ENCODE measurements at regions of chr3 and their contacts with region 1.

Region 1: DNA sequence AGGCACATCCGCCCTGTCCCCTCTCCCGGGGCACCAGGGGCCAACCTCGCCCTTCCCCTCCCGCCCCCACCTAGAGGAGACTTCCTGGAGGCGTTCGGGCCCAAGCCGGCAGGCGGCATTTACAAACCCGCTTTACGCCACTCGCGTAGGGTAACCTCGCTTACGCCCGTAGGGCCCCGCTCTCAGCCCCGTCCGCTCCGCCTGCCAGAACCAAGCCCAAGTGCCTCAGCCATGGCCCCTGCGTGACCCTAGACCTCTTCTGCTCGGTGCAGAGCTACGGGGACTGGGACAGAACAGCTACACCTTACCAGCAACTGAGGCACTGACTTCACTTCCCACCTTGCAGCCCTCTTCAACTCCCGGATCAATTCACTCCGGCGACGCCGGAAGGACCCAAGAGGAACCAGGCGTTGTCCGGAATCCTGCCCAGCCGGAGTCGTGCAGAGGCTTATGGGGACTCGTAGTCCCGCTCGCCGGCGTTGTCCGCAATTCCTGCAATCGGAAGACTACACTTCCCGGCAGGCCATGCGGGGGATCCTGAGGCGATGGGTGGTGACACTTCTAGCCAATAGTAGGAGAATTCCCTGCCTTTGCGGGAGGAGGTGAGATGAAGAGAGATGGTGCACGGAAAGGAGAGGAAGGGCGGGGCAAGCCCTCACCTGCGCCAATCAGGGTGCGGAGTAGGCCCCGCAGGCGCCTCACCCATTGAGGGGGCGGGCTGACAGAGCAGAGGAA is at the start of gene PDCD10:
- DNase-seq: peak; percentile 98
- ATAC-seq: peak; percentile 84
- H3K4me3 ChIP-seq: peak within 1 kb of the TSS; percentile 85 to 99 (median 90)
- H3K4me3 Mint-ChIP-seq: no peak within 1 kb of the TSS
- H3K27ac ChIP-seq: peak within 1 kb of the TSS; percentile 72 to 91
- H3K27ac Mint-ChIP-seq: no peak within 1 kb of the TSS
- H3K4me1 ChIP-seq: peaks cover 7 to 41% of the 10 kb centered on the region in 2 donors
- H3K4me1 Mint-ChIP-seq: peaks cover 29% of the 10 kb centered on the region
- H3K27me3 ChIP-seq: no peaks in the 10 kb centered on the region
- H3K27me3 Mint-ChIP-seq: no peaks in the 10 kb centered on the region
- CTCF ChIP-seq: no peak
- total RNA-seq, gene PDCD10: 54.4 and 58.0 TPM in 2 replicates

Region 2: DNA sequence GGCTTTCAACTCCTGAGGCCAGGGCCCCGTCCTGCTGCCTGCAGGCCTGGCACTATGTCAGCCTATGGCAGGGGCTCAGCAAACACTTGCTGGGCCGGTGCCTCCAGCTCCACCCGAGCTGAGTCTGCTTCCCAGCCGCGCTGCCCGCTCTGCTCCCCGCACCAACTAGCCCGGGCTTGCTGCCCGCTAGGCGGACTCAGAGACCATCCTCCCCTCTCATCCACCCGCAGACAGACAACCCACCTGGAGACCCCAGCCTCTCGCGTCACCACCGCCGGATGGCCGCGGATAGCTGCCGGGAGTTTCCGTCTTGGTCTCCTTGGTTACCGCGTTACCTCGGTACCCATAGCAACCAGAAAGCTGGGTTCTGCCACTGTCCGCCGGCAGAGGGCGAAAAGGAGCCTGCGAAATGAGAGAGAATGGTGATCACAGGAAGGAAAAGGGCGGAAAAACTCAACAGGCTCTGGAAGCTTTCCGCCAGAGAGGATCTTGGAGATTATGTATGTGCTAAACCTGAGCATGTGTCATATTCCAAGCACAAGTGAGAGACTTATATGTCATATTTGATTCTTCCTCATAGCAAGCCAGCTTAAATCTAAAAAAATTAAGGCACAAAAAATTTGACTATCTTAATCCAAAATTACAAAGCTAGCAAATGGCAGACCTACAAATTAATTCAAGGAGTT is 354.5 kb before region 1 on chr3 and contains the start of gene ZBBX:
- CTCF ChIA-PET with region 1: interaction called, 4 read pairs
- POLR2A ChIA-PET with region 1: no interaction called
- intact Hi-C with region 1: loop called (anchors 2 kb)
- DNase-seq: peak; percentile 92
- ATAC-seq: peak; percentile 95
- H3K4me3 ChIP-seq: peak within 1 kb of the TSS in 4 of 5 experiments; percentile 33 to 56 (median 48)
- H3K4me3 Mint-ChIP-seq: peak within 1 kb of the TSS; percentile 89
- H3K27ac ChIP-seq: peak within 1 kb of the TSS; percentile 13 to 45
- H3K27ac Mint-ChIP-seq: peak within 1 kb of the TSS; percentile 69
- H3K4me1 ChIP-seq: peaks cover 7 to 8% of the 10 kb centered on the region in 2 donors
- H3K4me1 Mint-ChIP-seq: peaks cover 8% of the 10 kb centered on the region
- H3K27me3 ChIP-seq: peaks cover 0 to 3% (median 0%) of the 10 kb centered on the region in 4 experiments
- H3K27me3 Mint-ChIP-seq: peaks cover 5% of the 10 kb centered on the region
- CTCF ChIP-seq: peak; percentile 91
- total RNA-seq, gene ZBBX: not detected in 2 replicates

Region 3: GRCh38 chr3:167691366-167691765 is 43.3 kb before region 1 on chr3:
- CTCF ChIA-PET with region 1: no interaction called
- POLR2A ChIA-PET with region 1: no interaction called
- intact Hi-C with region 1: loop called (anchors 2 kb)
- DNase-seq: peak; percentile 60
- ATAC-seq: peak; percentile 96
- H3K4me3 ChIP-seq: no peak overlapping the region
- H3K4me3 Mint-ChIP-seq: peak overlapping the region; percentile 2
- H3K27ac ChIP-seq: peak overlapping the region in 1 of 2 donors; percentile 31
- H3K27ac Mint-ChIP-seq: peak overlapping the region; percentile 39
- H3K4me1 ChIP-seq: peaks cover 9 to 14% of the 10 kb centered on the region in 2 donors
- H3K4me1 Mint-ChIP-seq: peaks cover 14% of the 10 kb centered on the region
- H3K27me3 ChIP-seq: no peaks in the 10 kb centered on the region
- H3K27me3 Mint-ChIP-seq: no peaks in the 10 kb centered on the region
- CTCF ChIP-seq: no peak

Region 4: DNA sequence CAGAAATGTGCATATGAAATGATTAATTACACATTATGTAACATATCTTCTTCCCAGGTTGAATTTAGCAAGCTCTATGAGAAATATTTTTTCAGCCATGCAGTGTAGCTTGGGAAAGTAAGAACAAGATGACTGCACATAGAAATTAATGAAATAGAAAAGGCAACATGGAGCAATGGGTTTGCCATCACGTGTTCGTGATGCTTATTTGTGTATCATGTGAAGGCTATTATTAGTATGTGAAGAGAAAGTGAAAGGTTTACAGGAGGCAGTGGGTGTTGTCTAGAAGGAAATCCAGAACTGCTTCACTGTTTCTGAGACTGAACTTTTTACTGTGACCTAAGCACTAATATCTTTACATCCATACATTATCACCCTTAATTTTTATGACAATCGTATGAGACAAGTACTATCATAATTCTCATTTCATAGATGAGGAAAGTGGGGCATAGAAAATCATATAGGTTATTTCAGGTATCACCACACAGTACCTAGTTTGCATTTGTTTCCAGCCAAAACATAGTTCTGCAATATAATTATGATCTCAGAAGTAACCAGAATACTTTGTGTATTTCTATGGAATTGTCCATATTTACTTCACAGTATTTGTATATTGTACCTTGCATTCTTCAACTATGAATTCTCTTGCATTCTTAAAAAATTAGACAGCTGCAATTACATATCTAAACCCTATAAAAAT is 15.8 kb after region 1 on chr3:
- CTCF ChIA-PET with region 1: interaction called, 32 read pairs
- POLR2A ChIA-PET with region 1: interaction called, 12 read pairs
- intact Hi-C with region 1: loop called (anchors 1 kb)
- DNase-seq: peak; percentile 83
- ATAC-seq: peak; percentile 87
- H3K4me3 ChIP-seq: peak overlapping the region in 3 of 5 experiments; percentile 13 to 45 (median 15)
- H3K4me3 Mint-ChIP-seq: peak overlapping the region; percentile 84
- H3K27ac ChIP-seq: peak overlapping the region; percentile 73 to 83
- H3K27ac Mint-ChIP-seq: peak overlapping the region; percentile 95
- H3K4me1 ChIP-seq: peaks cover 35 to 66% of the 10 kb centered on the region in 2 donors
- H3K4me1 Mint-ChIP-seq: peaks cover 77% of the 10 kb centered on the region
- H3K27me3 ChIP-seq: no peaks in the 10 kb centered on the region
- H3K27me3 Mint-ChIP-seq: no peaks in the 10 kb centered on the region
- CTCF ChIP-seq: no peak

Region 5: GRCh38 chr3:167783781-167784180 is 49.1 kb after region 1 on chr3:
- CTCF ChIA-PET with region 1: no interaction called
- POLR2A ChIA-PET with region 1: no interaction called
- intact Hi-C with region 1: no loop called
- DNase-seq: no peak
- ATAC-seq: no peak
- H3K4me3 ChIP-seq: no peak overlapping the region
- H3K4me3 Mint-ChIP-seq: no peak overlapping the region
- H3K27ac ChIP-seq: no peak overlapping the region
- H3K27ac Mint-ChIP-seq: no peak overlapping the region
- H3K4me1 ChIP-seq: no peaks in the 10 kb centered on the region
- H3K4me1 Mint-ChIP-seq: peaks cover 2% of the 10 kb centered on the region
- H3K27me3 ChIP-seq: no peaks in the 10 kb centered on the region
- H3K27me3 Mint-ChIP-seq: no peaks in the 10 kb centered on the region
- CTCF ChIP-seq: no peak

Region 6: GRCh38 chr3:167830007-167830406 is 95.3 kb after region 1 on chr3:
- CTCF ChIA-PET with region 1: no interaction called
- POLR2A ChIA-PET with region 1: no interaction called
- intact Hi-C with region 1: loop called (anchors 2 kb)
- DNase-seq: peak; percentile 64
- ATAC-seq: peak; percentile 87
- H3K4me3 ChIP-seq: peak overlapping the region in 2 of 5 experiments; percentile 11
- H3K4me3 Mint-ChIP-seq: peak overlapping the region; percentile 56
- H3K27ac ChIP-seq: peak overlapping the region; percentile 64 to 79
- H3K27ac Mint-ChIP-seq: peak overlapping the region; percentile 91
- H3K4me1 ChIP-seq: peaks cover 23 to 27% of the 10 kb centered on the region in 2 donors
- H3K4me1 Mint-ChIP-seq: peaks cover 22% of the 10 kb centered on the region
- H3K27me3 ChIP-seq: no peaks in the 10 kb centered on the region
- H3K27me3 Mint-ChIP-seq: no peaks in the 10 kb centered on the region
- CTCF ChIP-seq: no peak

Region 7: DNA sequence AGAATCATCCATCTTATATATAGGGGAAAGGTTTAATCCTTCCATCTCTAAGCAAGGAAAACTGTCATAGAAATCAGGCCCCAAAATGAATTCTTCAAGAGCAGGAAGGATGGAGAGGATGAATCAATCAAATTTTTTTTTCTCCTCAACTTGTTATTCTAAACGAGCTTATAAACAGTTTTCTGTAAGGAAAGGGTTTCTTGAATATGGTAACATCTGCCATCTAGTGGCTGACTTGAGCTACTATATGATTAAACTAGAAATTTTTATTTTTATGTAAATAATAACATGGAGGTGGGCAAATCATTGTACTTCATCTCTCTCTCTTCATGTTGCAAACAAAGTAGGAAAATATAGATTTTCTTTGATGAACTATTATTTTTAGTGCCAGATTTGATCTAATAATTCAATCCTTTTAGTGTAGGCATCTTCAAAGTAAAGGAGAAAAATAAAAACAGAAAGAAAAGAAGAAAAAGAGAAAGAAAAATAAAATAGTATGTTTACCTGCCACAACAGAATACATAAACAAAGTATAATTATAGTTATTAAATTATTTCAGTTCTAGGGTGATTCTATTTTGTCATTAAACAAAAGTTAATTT is 147.5 kb after region 1 on chr3:
- CTCF ChIA-PET with region 1: interaction called, 7 read pairs
- POLR2A ChIA-PET with region 1: no interaction called
- intact Hi-C with region 1: loop called (anchors 2 kb)
- DNase-seq: peak; percentile 68
- ATAC-seq: peak; percentile 47
- H3K4me3 ChIP-seq: no peak overlapping the region
- H3K4me3 Mint-ChIP-seq: peak overlapping the region; percentile 44
- H3K27ac ChIP-seq: no peak overlapping the region
- H3K27ac Mint-ChIP-seq: no peak overlapping the region
- H3K4me1 ChIP-seq: peaks cover 0 to 5% of the 10 kb centered on the region in 2 donors
- H3K4me1 Mint-ChIP-seq: peaks cover 4% of the 10 kb centered on the region
- H3K27me3 ChIP-seq: no peaks in the 10 kb centered on the region
- H3K27me3 Mint-ChIP-seq: peaks cover 11% of the 10 kb centered on the region
- CTCF ChIP-seq: peak; percentile 90

Region 8: GRCh38 chr3:168095611-168096209 is 361.0 kb after region 1 on chr3 and contains the start of gene GOLIM4:
- CTCF ChIA-PET with region 1: no interaction called
- POLR2A ChIA-PET with region 1: interaction called, 3 read pairs
- intact Hi-C with region 1: loop called (anchors 1 kb)
- DNase-seq: peak; percentile 90
- ATAC-seq: peak; percentile 77
- H3K4me3 ChIP-seq: peak within 1 kb of the TSS; percentile 56 to 82 (median 73)
- H3K4me3 Mint-ChIP-seq: peak within 1 kb of the TSS; percentile 100
- H3K27ac ChIP-seq: peak within 1 kb of the TSS; percentile 38 to 76
- H3K27ac Mint-ChIP-seq: peak within 1 kb of the TSS; percentile 97
- H3K4me1 ChIP-seq: peaks cover 9 to 11% of the 10 kb centered on the region in 2 donors
- H3K4me1 Mint-ChIP-seq: peaks cover 20% of the 10 kb centered on the region
- H3K27me3 ChIP-seq: no peaks in the 10 kb centered on the region
- H3K27me3 Mint-ChIP-seq: no peaks in the 10 kb centered on the region
- CTCF ChIP-seq: no peak
- total RNA-seq, gene GOLIM4: 9.3 and 10.5 TPM in 2 replicates

Measured in B cell (primary cell).